ENCODE measurements at regions of chr20 and their contacts with region 1.

Region 1: DNA sequence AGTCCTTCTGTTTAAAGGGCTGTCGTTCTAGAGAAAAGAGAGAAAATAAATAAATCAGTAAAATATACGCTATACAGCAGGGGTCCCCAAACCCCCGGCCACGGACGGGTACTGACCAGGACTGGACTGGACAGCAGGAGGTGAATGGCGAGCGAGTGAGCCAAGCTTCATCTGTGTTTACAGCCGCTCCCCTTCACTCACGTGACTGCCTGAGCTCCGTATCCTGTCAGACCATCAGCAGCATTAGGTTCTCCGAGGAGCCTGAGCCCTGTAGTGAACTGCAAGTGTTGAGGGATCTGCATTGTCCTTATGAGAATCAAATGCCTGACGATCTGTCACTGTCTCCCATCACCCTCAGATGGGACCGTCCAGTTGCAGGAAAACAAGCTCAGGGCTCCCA is 76.5 kb downstream of the ZNF217 start:
- DNase-seq: no peak
- H3K4me3 ChIP-seq: no peak overlapping the region
- H3K27ac ChIP-seq: no peak overlapping the region
- H3K4me1 ChIP-seq: peaks cover 18% of the 10 kb centered on the region
- H3K27me3 ChIP-seq: no peaks in the 10 kb centered on the region
- CTCF ChIP-seq: no peak

Region 2: GRCh38 chr20:53238121-53238660 is 279.0 kb before region 1 on chr20:
- CTCF ChIA-PET with region 1: no interaction called
- POLR2A ChIA-PET with region 1: interaction called, 14 read pairs
- intact Hi-C with region 1: no loop called
- DNase-seq: no peak
- H3K4me3 ChIP-seq: no peak overlapping the region
- H3K27ac ChIP-seq: no peak overlapping the region
- H3K4me1 ChIP-seq: no peaks in the 10 kb centered on the region
- H3K27me3 ChIP-seq: no peaks in the 10 kb centered on the region
- CTCF ChIP-seq: no peak

Region 3: DNA sequence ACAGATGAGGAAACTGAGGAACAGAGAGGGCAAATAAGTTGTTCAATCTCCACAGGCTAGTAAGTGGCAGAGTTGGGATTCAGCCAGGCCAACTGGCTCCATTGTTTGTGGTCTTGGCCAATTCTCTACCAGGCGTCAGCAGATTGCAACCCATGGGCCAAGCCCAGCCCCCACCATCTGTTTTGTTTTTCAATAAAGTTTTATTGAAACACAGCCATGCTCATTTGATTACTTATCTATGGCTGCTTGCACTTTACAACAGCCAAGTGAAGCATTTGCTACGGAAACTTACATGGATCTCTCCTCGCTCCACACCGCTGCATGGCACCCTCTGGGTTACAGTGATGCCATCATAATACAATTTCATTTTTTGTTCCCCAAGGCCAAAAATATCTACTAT is 14.3 kb before region 1 on chr20:
- CTCF ChIA-PET with region 1: interaction called, 19 read pairs
- POLR2A ChIA-PET with region 1: no interaction called
- intact Hi-C with region 1: no loop called
- DNase-seq: no peak
- H3K4me3 ChIP-seq: no peak overlapping the region
- H3K27ac ChIP-seq: no peak overlapping the region
- H3K4me1 ChIP-seq: no peaks in the 10 kb centered on the region
- H3K27me3 ChIP-seq: no peaks in the 10 kb centered on the region
- CTCF ChIP-seq: no peak

Measured in A673 (cell line).